Activated naive CD4-positive, alpha-beta T cell treated with anti-CD3 and anti-CD28 coated beads for 36 hours (primary cell): ENCODE measurements at regions of chr17 and their contacts with region 1.

Region 1: DNA sequence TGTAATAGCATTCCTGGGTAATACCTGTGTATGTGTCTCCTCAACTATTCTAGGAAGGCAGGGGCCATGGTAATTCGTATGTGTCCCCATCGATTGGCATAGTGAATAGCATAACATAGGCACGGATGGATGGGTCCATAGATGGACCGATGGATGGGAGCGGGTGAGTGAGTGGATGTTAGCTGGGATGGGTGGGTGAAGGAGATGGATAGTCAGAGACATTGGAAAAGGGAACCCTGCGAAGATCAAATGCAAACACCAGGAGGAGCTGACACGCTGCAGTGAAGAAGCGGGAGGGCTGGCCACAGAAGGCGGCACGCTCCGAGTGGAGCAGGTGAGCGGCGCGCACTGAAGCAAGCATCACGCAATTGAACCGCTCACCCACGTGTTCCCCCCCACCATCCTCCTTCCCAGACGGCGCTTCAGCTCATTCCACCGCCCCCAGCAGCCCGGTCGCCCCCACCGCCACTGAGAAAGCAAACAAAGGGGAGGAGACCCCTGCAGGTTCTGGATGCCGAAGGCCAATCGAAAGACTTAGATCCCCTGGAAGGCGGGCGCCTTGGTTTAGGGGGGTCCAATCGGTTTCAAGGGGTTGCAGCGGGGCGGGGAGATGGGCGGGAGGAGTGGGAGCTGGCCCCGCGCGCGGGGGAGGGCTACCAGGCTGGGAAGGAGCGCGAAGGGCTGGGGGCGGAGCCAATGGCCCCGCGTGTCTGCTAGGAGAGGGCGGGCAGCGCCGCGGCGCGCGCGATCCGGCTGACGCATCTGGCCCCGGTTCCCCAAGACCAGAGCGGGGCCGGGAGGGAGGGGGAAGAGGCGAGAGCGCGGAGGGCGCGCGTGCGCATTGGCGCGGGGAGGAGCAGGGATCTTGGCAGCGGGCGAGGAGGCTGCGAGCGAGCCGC is at the start of gene ARRB2:
- DNase-seq: peak; percentile 97
- H3K4me3 Mint-ChIP-seq: peak within 1 kb of the TSS; percentile 80
- H3K27ac Mint-ChIP-seq: peak within 1 kb of the TSS; percentile 85
- H3K4me1 Mint-ChIP-seq: peaks cover 56% of the 10 kb centered on the region
- H3K27me3 Mint-ChIP-seq: no peaks in the 10 kb centered on the region
- total RNA-seq, gene ARRB2: 169 to 174 TPM

Region 2: DNA sequence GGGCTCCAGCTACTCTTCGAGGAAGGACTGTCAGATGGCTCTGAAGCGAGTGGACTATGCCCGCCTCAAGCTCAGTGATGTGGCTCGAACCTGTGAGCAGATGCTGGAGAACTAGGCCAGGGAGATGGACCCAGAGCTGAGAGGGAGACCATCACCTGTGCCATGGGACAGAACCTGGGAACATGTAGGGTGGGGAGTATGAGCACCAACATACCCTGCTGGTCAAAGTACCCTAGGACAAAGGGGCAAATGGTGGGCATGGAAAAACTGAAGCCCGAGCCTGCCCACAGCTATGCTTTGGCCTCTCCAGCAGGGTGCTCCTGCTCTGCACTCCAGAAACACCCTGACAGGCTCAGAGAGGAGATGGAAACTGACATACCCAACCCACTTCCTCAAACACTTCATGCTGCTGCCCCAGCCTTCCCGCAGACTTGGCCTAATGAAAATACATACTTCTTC is 23.1 kb after region 1 on chr17:
- CTCF ChIA-PET with region 1: interaction called, 4 read pairs
- intact Hi-C with region 1: loop called (anchors 1 kb)
- DNase-seq: peak; percentile 39
- H3K4me3 Mint-ChIP-seq: no peak overlapping the region
- H3K27ac Mint-ChIP-seq: no peak overlapping the region
- H3K4me1 Mint-ChIP-seq: peaks cover 32% of the 10 kb centered on the region
- H3K27me3 Mint-ChIP-seq: peaks cover 1% of the 10 kb centered on the region

Region 3: GRCh38 chr17:4806777-4807604 is 96.9 kb after region 1 on chr17 and contains the start of gene PLD2:
- CTCF ChIA-PET with region 1: no interaction called
- intact Hi-C with region 1: loop called (anchors 1 kb)
- DNase-seq: peak; percentile 91
- H3K4me3 Mint-ChIP-seq: peak within 1 kb of the TSS; percentile 75
- H3K27ac Mint-ChIP-seq: peak within 1 kb of the TSS; percentile 36
- H3K4me1 Mint-ChIP-seq: peaks cover 10% of the 10 kb centered on the region
- H3K27me3 Mint-ChIP-seq: no peaks in the 10 kb centered on the region
- total RNA-seq, gene PLD2: 17.4 to 17.6 TPM

Region 4: GRCh38 chr17:4881761-4882555 is 171.9 kb after region 1 on chr17:
- CTCF ChIA-PET with region 1: interaction called, 5 read pairs
- intact Hi-C with region 1: loop called (anchors 1 kb)
- DNase-seq: peak; percentile 79
- H3K4me3 Mint-ChIP-seq: no peak overlapping the region
- H3K27ac Mint-ChIP-seq: no peak overlapping the region
- H3K4me1 Mint-ChIP-seq: no peaks in the 10 kb centered on the region
- H3K27me3 Mint-ChIP-seq: no peaks in the 10 kb centered on the region

Region 5: GRCh38 chr17:4903051-4903818 is 193.2 kb after region 1 on chr17 and contains the start of gene CHRNE:
- CTCF ChIA-PET with region 1: interaction called, 3 read pairs
- intact Hi-C with region 1: loop called (anchors 1 kb)
- DNase-seq: peak; percentile 91
- H3K4me3 Mint-ChIP-seq: peak within 1 kb of the TSS; percentile 1
- H3K27ac Mint-ChIP-seq: peak within 1 kb of the TSS; percentile 48
- H3K4me1 Mint-ChIP-seq: peaks cover 32% of the 10 kb centered on the region
- H3K27me3 Mint-ChIP-seq: no peaks in the 10 kb centered on the region
- total RNA-seq, gene CHRNE: 0.22 to 0.38 TPM

Region 6: GRCh38 chr17:4948931-4949320 is 238.9 kb after region 1 on chr17:
- CTCF ChIA-PET with region 1: no interaction called
- intact Hi-C with region 1: loop called (anchors 2 kb)
- DNase-seq: peak; percentile 78
- H3K4me3 Mint-ChIP-seq: peak overlapping the region; percentile 97
- H3K27ac Mint-ChIP-seq: peak overlapping the region; percentile 99
- H3K4me1 Mint-ChIP-seq: peaks cover 35% of the 10 kb centered on the region
- H3K27me3 Mint-ChIP-seq: no peaks in the 10 kb centered on the region

Region 7: GRCh38 chr17:5281814-5282653 is 572.0 kb after region 1 on chr17 and contains the start of gene RABEP1:
- CTCF ChIA-PET with region 1: no interaction called
- intact Hi-C with region 1: loop called (anchors 5 kb)
- DNase-seq: peak; percentile 94
- H3K4me3 Mint-ChIP-seq: peak within 1 kb of the TSS; percentile 91
- H3K27ac Mint-ChIP-seq: peak within 1 kb of the TSS; percentile 88
- H3K4me1 Mint-ChIP-seq: peaks cover 38% of the 10 kb centered on the region
- H3K27me3 Mint-ChIP-seq: no peaks in the 10 kb centered on the region
- total RNA-seq, gene RABEP1: 57.9 to 59.3 TPM